ENCODE measurements at regions of chr9 and their contacts with region 1.

Region 1: DNA sequence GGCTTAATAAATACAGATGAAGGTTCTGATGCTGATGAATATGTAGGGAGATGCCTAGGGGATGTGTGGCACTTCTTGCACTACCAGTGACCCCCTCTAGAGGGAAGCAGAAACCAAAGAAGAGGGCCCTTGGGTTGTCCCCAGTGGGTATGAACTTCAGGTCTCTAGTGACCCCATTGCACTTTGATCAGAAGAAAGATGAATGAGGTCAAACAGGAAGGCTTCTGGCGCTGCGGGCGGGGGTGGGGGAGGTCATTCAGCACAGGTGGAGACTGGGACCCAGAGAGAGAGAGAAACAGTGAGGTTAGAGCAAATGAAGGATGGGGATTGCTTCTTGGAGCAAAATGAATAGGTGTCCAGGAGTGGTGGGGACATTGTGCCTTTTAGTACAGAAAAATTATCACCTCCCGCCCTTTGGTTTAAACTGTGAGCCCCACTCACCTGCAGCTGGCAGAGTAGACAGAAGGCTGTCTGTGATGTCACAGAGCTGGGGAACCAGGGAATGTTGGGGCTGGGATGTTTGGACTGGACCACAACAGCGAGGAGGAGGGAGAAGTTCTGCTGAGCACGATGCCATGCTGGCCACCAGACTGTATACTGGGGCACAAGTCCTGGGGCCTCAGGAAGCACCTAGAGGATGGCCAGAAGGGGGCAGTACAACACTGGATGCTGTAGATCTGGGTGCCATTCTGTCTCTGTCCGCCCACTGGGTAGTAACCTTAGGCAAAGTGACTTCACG is at the start of gene TEX48:
- DNase-seq: peak in 6 of 10 donors; percentile 5 to 64 (median 55)
- H3K4me3 ChIP-seq: no peak within 1 kb of the TSS
- H3K27ac ChIP-seq: no peak within 1 kb of the TSS
- H3K27me3 ChIP-seq: no peaks in the 10 kb centered on the region
- CTCF ChIP-seq: peak in 54 of 56 donors; percentile 15 to 71 (median 56)
- total RNA-seq, gene TEX48: not detected

Region 2: GRCh38 chr9:114538241-114538640 is 143.5 kb before region 1 on chr9:
- intact Hi-C with region 1: no loop called
- DNase-seq: no peak
- H3K4me3 ChIP-seq: no peak overlapping the region
- H3K27ac ChIP-seq: no peak overlapping the region
- H3K27me3 ChIP-seq: no peaks in the 10 kb centered on the region
- CTCF ChIP-seq: no peak

Region 3: DNA sequence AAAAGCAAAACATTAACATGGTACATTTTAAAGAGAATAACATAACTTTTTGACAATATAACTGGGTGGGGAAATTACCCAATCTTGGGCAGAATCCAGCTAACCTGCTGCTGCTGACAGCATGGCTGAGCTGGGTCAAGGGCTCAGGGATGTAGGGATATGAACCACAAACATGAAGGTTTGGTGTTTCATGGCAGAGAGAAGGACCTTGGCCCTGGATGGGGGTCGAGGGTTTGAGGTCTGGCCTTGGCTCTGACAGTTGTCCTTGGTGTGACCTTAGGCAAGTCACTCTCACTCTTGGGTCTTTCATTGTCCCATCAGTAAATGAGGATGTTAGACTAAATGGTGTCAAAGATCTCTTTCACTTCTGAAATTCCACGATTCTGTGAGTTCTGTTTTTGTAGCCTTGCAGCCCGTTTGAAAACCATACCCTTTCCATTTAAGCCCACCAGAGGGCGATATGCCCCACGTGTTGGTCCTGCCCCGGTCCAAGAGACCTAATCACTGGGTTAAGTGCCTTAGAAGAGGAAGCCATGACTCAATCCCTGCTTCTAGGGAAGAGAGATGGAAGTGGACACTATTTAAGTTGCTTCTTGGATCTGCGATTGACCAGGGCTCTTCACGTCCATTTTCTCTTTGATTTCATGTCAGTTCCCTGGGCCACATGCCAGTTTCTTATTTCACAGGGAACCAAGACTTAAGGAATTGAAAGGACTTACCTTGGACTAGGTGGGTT is 57.0 kb after region 1 on chr9:
- intact Hi-C with region 1: loop called in 1 of 2 experiments (anchors 5 kb)
- DNase-seq: peak in 7 of 10 donors; percentile 18 to 72 (median 55)
- H3K4me3 ChIP-seq: no peak overlapping the region
- H3K27ac ChIP-seq: no peak overlapping the region
- H3K27me3 ChIP-seq: peaks cover 0 to 3% (median 0%) of the 10 kb centered on the region in 45 donors
- CTCF ChIP-seq: peak; percentile 64 to 93 (median 82)

Region 4: GRCh38 chr9:115524453-115525059 is 842.8 kb after region 1 on chr9:
- intact Hi-C with region 1: loop called in 1 of 2 experiments (anchors 10 kb)
- DNase-seq: peak in 2 of 10 donors; percentile 12 to 20
- H3K4me3 ChIP-seq: no peak overlapping the region
- H3K27ac ChIP-seq: no peak overlapping the region
- H3K27me3 ChIP-seq: peaks cover 0 to 13% (median 0%) of the 10 kb centered on the region in 45 donors
- CTCF ChIP-seq: peak; percentile 48 to 89 (median 79)